ENCODE measurements at regions of chr1 and their contacts with region 1.

Region 1: GRCh38 chr1:21956720-21957552 is 19.8 kb upstream of the HSPG2 start:
- DNase-seq: peak; percentile 99
- H3K4me3 Mint-ChIP-seq: peak overlapping the region; percentile 63
- H3K27ac Mint-ChIP-seq: peak overlapping the region; percentile 83
- H3K4me1 Mint-ChIP-seq: peaks cover 18% of the 10 kb centered on the region
- H3K27me3 Mint-ChIP-seq: no peaks in the 10 kb centered on the region
- CTCF ChIP-seq: no peak

Region 2: DNA sequence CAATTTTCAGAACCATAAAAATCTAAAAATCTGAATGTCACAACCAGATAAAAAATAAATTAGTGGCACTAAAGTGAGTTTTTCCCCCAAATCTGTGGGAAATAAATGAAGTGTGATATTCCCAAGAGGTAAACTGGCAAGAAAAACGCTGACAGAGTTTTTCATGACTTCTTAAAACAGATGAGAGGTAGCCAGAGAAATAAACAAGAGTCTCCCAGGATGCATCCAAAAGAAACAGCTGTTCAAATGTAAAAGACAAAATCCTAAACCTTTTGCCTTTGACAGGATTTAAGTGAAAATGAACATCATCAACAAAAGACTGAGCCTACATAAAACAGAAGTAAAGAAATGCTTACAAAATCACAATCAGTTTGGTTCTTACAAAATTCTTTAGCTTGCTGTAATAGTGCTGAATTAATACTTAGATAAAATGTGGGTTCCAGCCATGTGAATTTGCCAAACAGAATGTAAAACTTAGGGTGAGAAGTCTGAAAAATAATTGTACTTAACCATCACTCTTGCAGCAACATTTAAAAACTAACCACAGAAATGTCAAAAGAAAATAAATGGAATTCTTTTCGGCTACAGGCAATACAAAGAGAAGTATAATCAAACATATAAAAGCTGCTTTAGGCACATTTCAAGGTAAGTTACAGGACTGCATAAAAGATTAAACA is 913.9 kb before region 1 on chr1:
- CTCF ChIA-PET with region 1: no interaction called
- POLR2A ChIA-PET with region 1: no interaction called
- intact Hi-C with region 1: no loop called
- DNase-seq: no peak
- H3K4me3 Mint-ChIP-seq: no peak overlapping the region
- H3K27ac Mint-ChIP-seq: no peak overlapping the region
- H3K4me1 Mint-ChIP-seq: peaks cover 19% of the 10 kb centered on the region
- H3K27me3 Mint-ChIP-seq: no peaks in the 10 kb centered on the region
- CTCF ChIP-seq: no peak

Region 3: DNA sequence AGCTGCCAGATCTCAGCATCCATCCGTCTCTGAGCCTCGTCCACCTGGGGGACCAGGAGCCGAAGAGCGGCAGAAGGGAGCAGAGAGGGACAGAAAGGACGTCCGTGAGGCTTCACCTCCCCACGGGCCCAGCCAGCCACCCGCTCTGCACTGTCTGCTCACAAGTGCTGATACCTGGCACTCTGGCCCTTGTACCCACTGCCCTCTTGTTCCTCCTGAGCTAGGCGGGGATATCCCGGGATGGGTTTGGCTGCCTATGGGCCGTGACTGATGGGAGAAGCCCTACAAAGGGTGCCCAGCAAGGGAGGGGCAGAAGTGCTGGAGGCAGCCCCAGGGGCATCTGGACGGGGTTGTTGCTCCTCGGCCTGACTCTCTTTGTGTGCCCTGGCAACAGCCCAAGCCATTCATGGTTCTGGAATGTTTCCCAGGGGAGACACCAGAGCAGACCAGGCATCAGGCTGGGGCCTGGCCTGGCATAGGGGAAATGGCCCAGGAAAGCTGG is 87.3 kb before region 1 on chr1:
- CTCF ChIA-PET with region 1: interaction called, 3 read pairs
- POLR2A ChIA-PET with region 1: interaction called, 6 read pairs
- intact Hi-C with region 1: loop called (anchors 10 kb)
- DNase-seq: peak; percentile 97
- H3K4me3 Mint-ChIP-seq: no peak overlapping the region
- H3K27ac Mint-ChIP-seq: no peak overlapping the region
- H3K4me1 Mint-ChIP-seq: peaks cover 24% of the 10 kb centered on the region
- H3K27me3 Mint-ChIP-seq: no peaks in the 10 kb centered on the region
- CTCF ChIP-seq: no peak

Region 4: GRCh38 chr1:21907079-21907418 is 49.9 kb before region 1 on chr1:
- CTCF ChIA-PET with region 1: no interaction called
- POLR2A ChIA-PET with region 1: no interaction called
- intact Hi-C with region 1: no loop called
- DNase-seq: no peak
- H3K4me3 Mint-ChIP-seq: no peak overlapping the region
- H3K27ac Mint-ChIP-seq: no peak overlapping the region
- H3K4me1 Mint-ChIP-seq: peaks cover 11% of the 10 kb centered on the region
- H3K27me3 Mint-ChIP-seq: no peaks in the 10 kb centered on the region
- CTCF ChIP-seq: no peak

Region 5: DNA sequence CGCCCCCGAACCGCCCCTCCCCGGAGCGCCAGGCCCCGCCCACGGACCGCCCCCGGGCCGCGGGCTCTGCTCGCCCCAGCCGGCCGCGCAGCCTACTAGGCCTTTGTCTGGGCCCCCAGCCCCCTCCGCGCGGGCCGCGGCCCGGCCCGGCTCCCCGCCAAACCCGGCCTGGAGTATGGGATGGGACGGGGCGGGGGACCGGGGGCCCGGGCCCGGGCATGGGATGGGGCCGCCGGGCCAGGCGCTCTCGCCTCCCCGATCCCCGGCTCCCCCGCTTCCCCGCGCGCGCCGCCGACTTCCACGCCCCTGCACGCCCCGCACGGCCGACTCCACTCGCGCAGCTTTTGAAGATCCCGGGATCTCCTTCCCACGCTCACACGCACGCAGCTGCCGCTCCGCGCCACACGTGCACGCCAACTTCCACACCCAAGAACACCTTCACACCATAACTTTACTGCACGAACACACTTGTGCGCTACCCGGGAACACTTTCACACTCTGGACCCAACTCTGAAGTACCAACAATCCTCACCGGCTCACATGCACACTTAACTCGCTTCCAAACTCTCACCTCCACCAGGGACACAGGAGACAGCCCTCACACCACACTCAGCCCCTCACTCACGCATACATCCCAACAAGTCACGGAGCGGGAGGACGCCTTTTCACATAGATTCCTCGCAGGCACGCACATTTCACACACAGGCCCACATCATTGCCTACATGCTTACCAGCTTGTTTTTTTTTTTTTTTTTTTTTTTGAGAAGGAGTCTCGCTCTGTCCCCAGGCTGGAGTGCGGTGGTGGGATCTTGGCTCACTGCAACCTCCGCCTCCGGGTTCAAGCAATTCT is 19.3 kb before region 1 on chr1:
- CTCF ChIA-PET with region 1: interaction called, 22 read pairs
- POLR2A ChIA-PET with region 1: interaction called, 219 read pairs
- intact Hi-C with region 1: no loop called
- DNase-seq: peak; percentile 81
- H3K4me3 Mint-ChIP-seq: peak overlapping the region; percentile 71
- H3K27ac Mint-ChIP-seq: peak overlapping the region; percentile 6
- H3K4me1 Mint-ChIP-seq: peaks cover 54% of the 10 kb centered on the region
- H3K27me3 Mint-ChIP-seq: no peaks in the 10 kb centered on the region
- CTCF ChIP-seq: no peak